ENCODE measurements at regions of chr19 and their contacts with region 1.

Region 1: DNA sequence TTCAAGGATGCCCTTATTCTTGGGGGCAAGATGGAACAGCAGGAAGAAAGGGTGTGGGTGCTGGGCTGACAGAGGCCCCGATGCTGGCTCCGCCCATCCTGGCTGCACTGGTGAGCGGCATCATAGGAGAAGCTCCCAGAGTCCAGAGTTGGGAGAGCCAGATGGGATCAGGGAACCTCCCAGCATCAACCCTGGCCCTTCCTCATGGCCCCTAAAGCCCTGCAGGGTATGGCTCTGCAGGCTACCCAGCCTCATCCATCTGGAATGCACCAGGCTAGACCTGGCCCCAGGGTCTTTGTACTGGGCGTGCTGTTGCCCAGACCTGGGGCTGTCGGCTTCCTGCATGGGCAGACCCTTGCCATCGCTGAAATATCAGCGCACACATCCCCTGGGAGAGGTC is 7.9 kb upstream of the ELL start:
- DNase-seq: no peak
- H3K4me3 ChIP-seq: no peak overlapping the region
- H3K27ac ChIP-seq: no peak overlapping the region
- H3K4me1 ChIP-seq: no peaks in the 10 kb centered on the region
- H3K27me3 ChIP-seq: no peaks in the 10 kb centered on the region; a peak in 1 of 7 replicates
- CTCF ChIP-seq: no peak
- EP300 ChIP-seq: no peak
- POLR2A ChIP-seq: no peak; a peak in 1 of 3 replicates
- RAD21 ChIP-seq: no peak

Region 2: GRCh38 chr19:18385675-18386542 is 143.9 kb before region 1 on chr19 and contains the start of gene GDF15:
- CTCF ChIA-PET with region 1: no interaction called
- POLR2A ChIA-PET with region 1: no interaction called
- DNase-seq: peak in 1 of 2 experiments; percentile 90
- H3K4me3 ChIP-seq: peak within 1 kb of the TSS in 2 of 4 experiments; percentile 10 to 38; a peak in 3 of 8 replicates
- H3K27ac ChIP-seq: no peak within 1 kb of the TSS
- H3K4me1 ChIP-seq: peaks cover 3 to 4% (median 3%) of the 10 kb centered on the region in 4 experiments
- H3K27me3 ChIP-seq: peaks cover 0 to 23% (median 14%) of the 10 kb centered on the region in 4 experiments; a peak in 6 of 7 replicates
- CTCF ChIP-seq: peak; percentile 84 to 93 (median 89)
- EP300 ChIP-seq: no peak
- POLR2A ChIP-seq: peak in 1 of 2 experiments; percentile 74; a peak in 2 of 3 replicates
- RAD21 ChIP-seq: peak; percentile 49 to 64
- total RNA-seq, gene GDF15: 4.1 and 5.0 TPM in 2 replicates

Region 3: GRCh38 chr19:18436671-18437490 is 92.9 kb before region 1 on chr19:
- CTCF ChIA-PET with region 1: no interaction called
- POLR2A ChIA-PET with region 1: no interaction called
- DNase-seq: peak in 1 of 2 experiments; percentile 92
- H3K4me3 ChIP-seq: peak overlapping the region; percentile 62 to 94 (median 78)
- H3K27ac ChIP-seq: peak overlapping the region; percentile 58; the same call in 1 of the 2 replicates
- H3K4me1 ChIP-seq: peaks cover 5 to 39% (median 26%) of the 10 kb centered on the region in 4 experiments
- H3K27me3 ChIP-seq: no peaks in the 10 kb centered on the region; a peak in 1 of 7 replicates
- CTCF ChIP-seq: no peak
- EP300 ChIP-seq: no peak
- POLR2A ChIP-seq: peak in 1 of 2 experiments; percentile 33; a peak in 2 of 3 replicates
- RAD21 ChIP-seq: no peak

Region 4: DNA sequence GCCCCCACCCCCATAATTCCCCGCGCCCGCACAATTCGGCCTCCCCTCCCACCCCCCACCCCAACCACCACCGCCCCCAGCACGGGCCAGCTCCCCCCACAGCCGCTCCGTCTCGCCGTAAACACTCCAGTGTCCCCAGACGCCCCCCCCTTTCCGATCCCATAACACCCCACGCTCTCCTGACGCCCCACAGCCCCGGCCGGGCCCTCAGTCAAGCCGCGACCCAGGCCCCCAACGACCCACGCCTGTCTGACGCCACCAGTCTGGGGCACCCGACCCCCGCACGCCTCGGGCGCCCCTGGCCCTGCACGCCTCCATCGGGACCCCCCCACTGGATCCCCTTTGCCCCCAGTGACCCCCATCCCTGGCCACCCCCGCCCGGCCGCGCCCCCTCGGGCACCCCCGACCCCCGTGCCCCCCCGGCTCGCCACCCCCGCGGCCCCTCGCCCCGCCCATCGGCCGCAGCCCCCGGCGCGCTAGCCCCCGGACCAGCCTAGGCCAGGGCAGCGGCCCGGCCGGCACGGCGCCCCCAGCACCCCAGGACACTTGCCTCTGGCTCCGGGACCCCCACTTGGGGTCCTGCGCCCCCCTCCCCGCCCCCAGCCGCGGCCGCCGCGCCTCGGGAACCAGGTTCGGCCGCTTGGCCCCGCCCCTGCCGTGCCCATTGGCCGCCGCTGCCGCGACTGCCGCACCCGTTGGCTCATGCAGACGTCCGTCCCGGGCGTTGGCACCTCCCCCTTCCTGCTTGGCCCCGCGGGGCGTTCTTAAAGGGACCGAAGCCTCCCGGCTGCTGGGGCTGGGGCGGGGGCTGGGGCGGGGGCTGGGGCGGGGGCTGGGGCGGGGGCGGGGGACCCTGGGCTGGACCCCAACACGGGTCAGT is 13.4 kb after region 1 on chr19 and contains the start of gene FKBP8:
- CTCF ChIA-PET with region 1: interaction called, 4 read pairs
- POLR2A ChIA-PET with region 1: interaction called, 22 read pairs
- DNase-seq: peak; percentile 66 to 97
- H3K4me3 ChIP-seq: peak within 1 kb of the TSS; percentile 61 to 77 (median 64)
- H3K27ac ChIP-seq: no peak within 1 kb of the TSS; the same call in 1 of the 2 replicates
- H3K4me1 ChIP-seq: peaks cover 0 to 9% (median 4%) of the 10 kb centered on the region in 4 experiments; a peak in 1 of 7 replicates
- H3K27me3 ChIP-seq: no peaks in the 10 kb centered on the region
- CTCF ChIP-seq: no peak
- EP300 ChIP-seq: no peak
- POLR2A ChIP-seq: no peak
- RAD21 ChIP-seq: no peak
- total RNA-seq, gene FKBP8: 264 and 273 TPM in 2 replicates

Region 5: GRCh38 chr19:18599485-18599884 is 69.7 kb after region 1 on chr19:
- CTCF ChIA-PET with region 1: no interaction called
- POLR2A ChIA-PET with region 1: no interaction called
- DNase-seq: no peak
- H3K4me3 ChIP-seq: no peak overlapping the region
- H3K27ac ChIP-seq: no peak overlapping the region
- H3K4me1 ChIP-seq: peaks cover 3 to 33% (median 23%) of the 10 kb centered on the region in 4 experiments
- H3K27me3 ChIP-seq: peaks cover 15 to 37% (median 33%) of the 10 kb centered on the region in 4 experiments
- CTCF ChIP-seq: no peak
- EP300 ChIP-seq: no peak
- POLR2A ChIP-seq: no peak
- RAD21 ChIP-seq: no peak

Region 6: GRCh38 chr19:18609717-18610051 is 79.9 kb after region 1 on chr19:
- CTCF ChIA-PET with region 1: no interaction called
- POLR2A ChIA-PET with region 1: no interaction called
- DNase-seq: no peak
- H3K4me3 ChIP-seq: no peak overlapping the region
- H3K27ac ChIP-seq: no peak overlapping the region
- H3K4me1 ChIP-seq: peaks cover 28 to 61% (median 41%) of the 10 kb centered on the region in 4 experiments
- H3K27me3 ChIP-seq: peaks cover 86 to 96% (median 96%) of the 10 kb centered on the region in 4 experiments
- CTCF ChIP-seq: no peak
- EP300 ChIP-seq: no peak
- POLR2A ChIP-seq: no peak
- RAD21 ChIP-seq: no peak